ENCODE measurements at regions of chr1 and their contacts with region 1.

Region 1: DNA sequence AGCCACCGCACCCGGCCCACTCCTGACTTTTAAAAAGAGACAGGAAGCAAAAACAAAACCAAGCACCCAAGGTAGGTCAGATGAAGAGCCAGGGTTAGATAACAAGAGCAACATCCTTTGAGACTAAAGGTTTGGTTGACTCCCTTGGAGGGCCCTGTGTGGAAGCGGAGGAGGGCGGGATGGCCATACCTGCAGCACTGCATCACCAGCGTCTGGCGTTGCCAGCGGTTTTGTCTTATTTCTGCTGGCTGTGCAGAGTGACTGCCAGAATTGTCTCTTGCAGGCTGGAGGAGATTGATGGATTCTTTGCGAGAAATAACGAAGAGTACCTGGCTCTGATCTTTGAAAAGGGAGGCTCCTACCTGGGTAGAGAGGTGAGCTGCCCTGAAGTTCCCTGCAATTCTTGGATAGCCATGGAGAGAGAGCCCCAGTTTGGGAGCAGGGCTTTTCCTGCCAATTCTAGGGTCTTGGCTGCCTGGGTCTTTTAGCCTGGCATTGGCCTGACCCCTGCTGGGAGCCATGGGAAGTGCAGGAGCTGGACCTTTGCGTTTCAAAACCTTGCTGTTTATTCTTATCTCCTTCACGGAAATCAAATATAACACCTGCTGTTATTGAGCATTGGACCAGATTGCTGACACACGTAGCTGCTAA is 24.0 kb downstream of the QSOX1 start:
- DNase-seq: peak in 1 of 2 donors; percentile 33
- ATAC-seq: peak in 1 of 2 donors; percentile 40
- H3K4me3 ChIP-seq: no peak overlapping the region
- H3K27ac ChIP-seq: no peak overlapping the region
- H3K4me1 ChIP-seq: peaks cover 11 to 13% of the 10 kb centered on the region in 2 donors
- H3K27me3 ChIP-seq: no peaks in the 10 kb centered on the region
- CTCF ChIP-seq: peak; percentile 88 to 96 (median 90)
- POLR2A ChIP-seq: no peak

Region 2: GRCh38 chr1:179706339-179706941 is 472.2 kb before region 1 on chr1:
- in situ Hi-C with region 1: loop called in 1 of 4 experiments (anchors 25 kb)
- intact Hi-C with region 1: loop called (anchors 2 kb)
- DNase-seq: peak in 1 of 2 donors; percentile 9
- ATAC-seq: no peak
- H3K4me3 ChIP-seq: no peak overlapping the region
- H3K27ac ChIP-seq: no peak overlapping the region
- H3K4me1 ChIP-seq: peaks cover 0 to 11% of the 10 kb centered on the region in 2 donors
- H3K27me3 ChIP-seq: no peaks in the 10 kb centered on the region
- CTCF ChIP-seq: peak; percentile 47 to 73 (median 60)
- POLR2A ChIP-seq: no peak

Region 3: GRCh38 chr1:179955298-179955680 is 223.3 kb before region 1 on chr1:
- in situ Hi-C with region 1: no loop called
- intact Hi-C with region 1: no loop called
- DNase-seq: peak in 1 of 2 donors; percentile 38
- ATAC-seq: peak; percentile 20 to 23
- H3K4me3 ChIP-seq: peak overlapping the region; percentile 75 to 97 (median 92)
- H3K27ac ChIP-seq: peak overlapping the region; percentile 93 to 98 (median 97)
- H3K4me1 ChIP-seq: peaks cover 17 to 38% of the 10 kb centered on the region in 2 donors
- H3K27me3 ChIP-seq: no peaks in the 10 kb centered on the region
- CTCF ChIP-seq: no peak
- POLR2A ChIP-seq: no peak

Region 4: GRCh38 chr1:180080433-180080832 is 98.2 kb before region 1 on chr1:
- in situ Hi-C with region 1: loop called in 2 of 4 experiments (anchors 25 kb)
- intact Hi-C with region 1: no loop called
- DNase-seq: no peak
- ATAC-seq: peak; percentile 58 to 87
- H3K4me3 ChIP-seq: no peak overlapping the region
- H3K27ac ChIP-seq: peak overlapping the region in 3 of 4 donors; percentile 19 to 57 (median 35)
- H3K4me1 ChIP-seq: no peaks in the 10 kb centered on the region
- H3K27me3 ChIP-seq: no peaks in the 10 kb centered on the region
- CTCF ChIP-seq: no peak
- POLR2A ChIP-seq: no peak

Region 5: DNA sequence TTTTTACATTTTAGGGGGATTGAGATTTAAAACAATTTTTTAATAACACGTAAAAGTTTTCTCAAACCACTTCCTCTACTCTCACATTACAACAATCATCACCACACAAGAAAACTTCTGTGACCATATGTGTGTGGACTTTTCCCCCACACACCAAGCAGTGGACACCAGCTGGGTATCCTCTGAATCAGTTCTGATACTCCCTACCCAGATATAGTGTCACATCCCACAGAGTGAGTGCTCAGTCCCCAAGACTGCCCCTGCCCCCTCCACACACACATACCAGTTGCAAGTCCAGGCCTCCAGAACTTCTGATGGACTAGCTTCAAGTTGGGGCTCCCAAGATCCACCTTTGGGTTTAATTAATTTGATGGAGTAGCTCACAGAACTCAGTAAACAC is 77.2 kb before region 1 on chr1:
- in situ Hi-C with region 1: loop called in 3 of 4 experiments (anchors 10 to 25 kb)
- intact Hi-C with region 1: no loop called
- DNase-seq: no peak
- ATAC-seq: no peak
- H3K4me3 ChIP-seq: no peak overlapping the region
- H3K27ac ChIP-seq: no peak overlapping the region
- H3K4me1 ChIP-seq: peaks cover 0 to 4% of the 10 kb centered on the region in 2 donors
- H3K27me3 ChIP-seq: no peaks in the 10 kb centered on the region
- CTCF ChIP-seq: no peak
- POLR2A ChIP-seq: no peak

Region 6: DNA sequence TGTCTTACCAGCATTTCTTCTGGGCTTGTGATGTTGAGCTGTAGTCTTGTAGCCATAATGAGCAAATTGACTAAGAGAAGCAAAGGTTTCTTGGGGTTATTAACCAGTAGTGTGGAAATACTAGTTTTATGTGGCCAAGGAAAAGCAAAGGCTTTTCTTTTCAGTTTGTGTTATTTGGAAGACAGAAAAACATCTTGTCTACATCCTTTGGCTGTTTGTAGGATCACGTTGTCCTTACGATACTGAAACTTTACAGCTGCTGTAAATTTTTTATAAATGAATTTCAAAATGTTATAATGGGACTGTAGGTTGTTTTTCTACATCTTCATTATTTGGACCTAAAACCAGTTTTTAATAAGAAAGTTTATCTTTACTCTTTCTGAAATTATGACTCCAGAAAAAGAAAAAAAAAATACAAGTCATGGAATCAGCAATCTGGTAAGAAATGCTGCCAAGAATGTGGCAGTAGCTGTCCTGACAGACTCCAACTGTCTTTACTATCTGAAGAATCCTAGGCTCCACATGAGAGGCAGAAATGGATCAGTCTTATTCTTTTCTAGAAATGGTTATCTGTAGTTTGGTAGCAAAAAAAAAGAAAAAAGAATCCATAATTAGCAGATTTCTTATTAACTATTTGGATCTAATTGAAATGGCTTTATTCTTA is 65.5 kb before region 1 on chr1:
- in situ Hi-C with region 1: loop called in 1 of 4 experiments (anchors 10 kb)
- intact Hi-C with region 1: loop called (anchors 5 kb)
- DNase-seq: no peak
- ATAC-seq: no peak
- H3K4me3 ChIP-seq: no peak overlapping the region
- H3K27ac ChIP-seq: no peak overlapping the region
- H3K4me1 ChIP-seq: no peaks in the 10 kb centered on the region
- H3K27me3 ChIP-seq: no peaks in the 10 kb centered on the region
- CTCF ChIP-seq: no peak
- POLR2A ChIP-seq: no peak

Region 7: DNA sequence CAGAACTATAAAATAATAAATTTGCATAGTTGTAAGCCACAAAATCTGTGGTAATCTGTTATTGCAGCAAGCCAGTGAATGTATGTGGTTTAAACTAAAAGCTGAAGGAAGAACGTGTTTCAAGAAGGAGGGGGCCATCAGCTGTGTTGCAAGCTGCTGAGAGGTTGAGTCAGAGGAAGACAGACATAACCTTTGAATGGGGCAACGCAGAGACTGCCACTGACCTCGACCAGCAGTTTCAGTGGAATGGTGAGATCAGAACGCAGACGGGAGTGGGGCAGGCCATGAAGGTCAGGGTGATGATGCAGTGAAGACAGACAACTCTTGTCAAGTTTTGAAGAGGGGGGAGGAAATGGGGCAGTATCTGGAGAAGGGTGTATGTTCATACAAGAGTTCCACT is 47.1 kb before region 1 on chr1:
- in situ Hi-C with region 1: no loop called
- intact Hi-C with region 1: no loop called
- DNase-seq: no peak
- ATAC-seq: no peak
- H3K4me3 ChIP-seq: no peak overlapping the region
- H3K27ac ChIP-seq: no peak overlapping the region
- H3K4me1 ChIP-seq: no peaks in the 10 kb centered on the region
- H3K27me3 ChIP-seq: no peaks in the 10 kb centered on the region
- CTCF ChIP-seq: no peak
- POLR2A ChIP-seq: no peak

Measured in gastrocnemius medialis (tissue), 4 donors.